CD14-positive monocyte (primary cell): ENCODE measurements at regions of chr14 and their contacts with region 1.

Region 1: DNA sequence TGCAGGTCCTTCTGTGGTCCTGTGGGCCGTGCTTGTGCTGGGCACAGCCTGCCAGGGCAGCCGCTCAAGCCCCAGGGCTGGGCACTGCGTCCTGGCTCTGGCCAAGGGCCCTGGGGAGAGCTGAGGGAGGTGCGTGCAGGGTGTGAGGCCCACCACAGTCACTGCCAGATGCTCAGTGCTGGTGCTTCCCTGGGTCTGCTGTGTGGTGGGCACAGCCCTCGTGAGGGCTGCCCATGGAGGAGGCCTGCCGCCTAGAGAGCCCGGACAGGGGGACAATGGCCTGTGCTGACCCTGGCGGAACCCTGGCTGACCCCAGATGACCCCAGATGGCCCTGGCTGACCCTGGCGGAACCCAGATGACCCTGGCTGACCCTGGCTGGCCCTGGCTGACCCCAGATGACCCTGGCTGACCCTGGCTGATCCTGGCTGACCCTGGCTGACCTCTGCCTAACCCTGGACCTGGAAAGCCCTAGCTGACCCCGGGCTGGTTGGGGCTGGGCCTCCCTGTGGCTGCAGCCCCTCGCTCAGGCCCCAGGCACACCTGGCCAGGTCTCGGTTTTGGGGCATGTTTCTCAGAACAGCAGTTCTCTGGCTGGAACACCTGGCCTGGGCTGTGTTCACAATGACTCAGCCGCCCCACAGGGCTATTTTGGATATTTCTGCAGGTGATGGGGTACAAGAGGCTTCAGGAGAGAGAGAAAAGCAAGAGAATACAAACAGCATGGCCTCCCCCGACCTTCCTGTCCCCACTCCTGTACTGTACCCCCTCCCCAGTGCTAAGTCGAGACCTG is 55.4 kb downstream of the TMEM121 start:
- DNase-seq: no peak
- H3K4me3 ChIP-seq: no peak overlapping the region
- H3K4me3 Mint-ChIP-seq: no peak overlapping the region
- H3K27ac ChIP-seq: no peak overlapping the region
- H3K27ac Mint-ChIP-seq: no peak overlapping the region
- H3K4me1 ChIP-seq: no peaks in the 10 kb centered on the region
- H3K4me1 Mint-ChIP-seq: no peaks in the 10 kb centered on the region
- H3K27me3 ChIP-seq: no peaks in the 10 kb centered on the region
- H3K27me3 Mint-ChIP-seq: peaks cover 0 to 3% (median 2%) of the 10 kb centered on the region in 3 donors
- CTCF ChIP-seq: no peak

Region 2: DNA sequence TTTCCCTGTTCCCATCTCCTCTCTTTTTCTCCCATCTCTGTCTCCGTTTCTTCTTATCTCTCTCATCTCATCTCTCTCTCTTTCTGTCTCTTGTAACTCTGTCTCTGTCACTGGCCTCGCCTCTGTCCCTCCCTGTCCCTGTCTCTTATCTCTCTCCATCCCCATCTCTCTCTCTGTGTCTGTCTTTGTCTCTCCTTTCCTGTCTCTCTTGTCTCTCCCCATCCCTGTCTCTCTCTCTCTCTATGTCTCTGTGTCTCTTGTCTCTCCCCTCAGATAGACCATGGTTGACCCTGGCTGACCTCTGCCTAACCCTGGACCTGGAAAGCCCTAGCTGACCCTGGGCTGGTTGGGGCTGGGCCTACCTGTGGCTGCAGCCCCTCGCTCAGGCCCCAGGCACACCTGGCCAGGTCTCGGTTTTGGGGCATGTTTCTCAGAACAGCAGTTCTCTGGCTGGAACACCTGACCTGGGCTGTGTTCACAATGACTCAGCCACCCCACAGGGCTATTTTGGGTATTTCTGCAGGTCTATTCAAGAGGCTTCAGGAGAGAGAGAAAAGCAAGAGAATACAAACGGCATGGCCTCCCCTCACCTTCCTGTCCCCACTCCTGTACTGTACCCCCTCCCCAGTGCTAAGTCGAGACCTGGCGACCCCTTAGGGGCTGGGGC is 119.0 kb after region 1 on chr14:
- intact Hi-C with region 1: loop called in 1 of 2 experiments (anchors 2 kb)
- DNase-seq: no peak
- H3K4me3 ChIP-seq: no peak overlapping the region
- H3K4me3 Mint-ChIP-seq: no peak overlapping the region
- H3K27ac ChIP-seq: no peak overlapping the region
- H3K27ac Mint-ChIP-seq: peak overlapping the region in 1 of 7 donors; percentile 51
- H3K4me1 ChIP-seq: no peaks in the 10 kb centered on the region
- H3K4me1 Mint-ChIP-seq: no peaks in the 10 kb centered on the region
- H3K27me3 ChIP-seq: no peaks in the 10 kb centered on the region
- H3K27me3 Mint-ChIP-seq: peaks cover 0 to 6% (median 0%) of the 10 kb centered on the region in 3 donors
- CTCF ChIP-seq: no peak